Dorsolateral prefrontal cortex (tissue), 120 donors: ENCODE measurements at regions of chr13 and their contacts with region 1.

Region 1: DNA sequence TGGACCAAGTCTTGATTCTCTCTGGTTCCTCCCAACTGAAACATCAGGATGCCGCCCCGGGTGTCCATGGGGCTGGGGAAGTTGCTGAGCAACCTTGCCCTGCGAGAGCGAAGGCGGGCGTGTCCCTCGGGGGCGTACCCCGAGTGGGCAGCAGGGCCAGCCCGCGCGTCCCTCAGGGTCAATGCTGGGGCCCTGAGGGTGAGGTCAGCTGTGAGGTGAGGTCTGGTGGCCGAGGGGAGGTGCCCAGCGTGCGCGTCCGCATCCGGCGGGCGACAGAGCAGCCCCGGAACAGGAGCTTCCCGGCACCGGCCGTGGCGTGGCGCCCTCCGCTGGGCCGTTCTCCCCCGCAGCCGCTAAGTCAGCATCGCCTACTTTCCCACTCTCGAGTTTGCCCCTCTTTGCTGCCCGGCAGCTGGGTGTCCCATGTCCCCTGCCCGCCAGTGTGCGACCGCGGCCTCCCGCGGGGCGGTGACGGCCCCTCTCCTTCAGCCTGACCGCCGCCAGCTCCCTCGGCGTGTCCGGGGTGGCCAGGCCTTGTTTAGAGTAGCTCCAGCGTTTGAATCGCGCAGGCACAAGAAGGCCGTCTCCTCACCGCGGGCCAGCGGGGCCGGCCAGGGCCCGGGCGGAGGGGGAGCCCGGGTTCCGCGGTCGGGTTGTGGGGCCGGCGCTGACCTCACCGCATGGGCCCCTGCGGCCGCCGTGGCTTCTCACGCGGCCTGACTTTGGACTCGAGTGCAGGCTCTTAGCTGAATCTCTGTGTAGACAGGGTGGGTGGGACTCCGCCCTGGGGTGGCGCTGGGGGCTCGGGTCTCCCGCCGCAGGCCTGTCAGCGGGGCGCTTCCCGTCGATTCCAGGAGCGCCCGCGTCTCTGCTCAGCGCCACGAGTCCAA is 33.0 kb downstream of the GJA3 start:
- DNase-seq: peak in 8 of 10 donors; percentile 31 to 80 (median 58)
- H3K4me3 ChIP-seq: peak overlapping the region; percentile 45 to 86 (median 67)
- H3K27ac ChIP-seq: peak overlapping the region in 51 of 59 donors; percentile 7 to 93 (median 74)
- H3K27me3 ChIP-seq: peaks cover 0 to 41% (median 15%) of the 10 kb centered on the region in 45 donors
- CTCF ChIP-seq: peak in 52 of 56 donors; percentile 22 to 76 (median 52)

Region 2: DNA sequence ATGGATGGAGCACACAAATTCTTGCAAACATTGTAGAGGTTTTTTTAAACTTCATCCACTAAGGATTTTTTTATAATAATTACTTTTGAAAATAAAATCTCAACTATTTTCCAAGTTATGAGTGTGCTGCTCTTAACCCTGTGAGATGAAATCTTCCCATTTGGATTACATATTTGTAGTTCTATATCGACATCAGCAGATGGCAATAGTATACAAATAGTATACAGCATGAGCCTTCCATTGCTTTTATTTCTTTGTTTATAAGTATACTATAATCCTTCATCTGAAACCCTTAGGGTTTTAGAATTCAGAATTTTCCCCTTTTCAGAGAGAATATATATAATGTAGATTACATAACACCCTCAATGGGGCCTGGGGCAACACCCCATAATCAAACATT is 37.5 kb before region 1 on chr13:
- intact Hi-C with region 1: loop called in 1 of 2 experiments (anchors 5 kb)
- DNase-seq: no peak
- H3K4me3 ChIP-seq: no peak overlapping the region
- H3K27ac ChIP-seq: peak overlapping the region in 1 of 59 donors; percentile 50
- H3K27me3 ChIP-seq: no peaks in the 10 kb centered on the region
- CTCF ChIP-seq: peak in 41 of 56 donors; percentile 5 to 66 (median 38)

Region 3: DNA sequence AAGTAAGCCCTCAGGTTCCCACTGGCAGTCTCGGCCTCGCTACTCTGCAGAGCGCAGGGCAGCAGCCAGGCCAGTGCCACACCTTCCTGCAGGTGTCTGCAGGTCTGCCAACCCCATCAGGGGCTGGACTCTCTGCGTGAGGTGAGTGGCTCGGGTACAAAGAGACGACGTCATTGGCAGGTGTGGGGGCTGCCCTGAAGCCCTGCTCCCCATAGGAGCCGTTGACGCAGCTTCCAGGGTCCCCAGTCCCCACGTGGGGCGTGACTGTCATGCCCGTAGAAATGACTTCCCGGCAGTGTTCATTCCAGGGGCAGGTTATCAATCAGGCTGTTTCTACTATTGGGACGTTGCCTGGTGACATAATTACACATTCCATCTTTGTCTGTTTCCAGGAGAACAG is 119.6 kb after region 1 on chr13:
- intact Hi-C with region 1: no loop called
- DNase-seq: no peak
- H3K4me3 ChIP-seq: no peak overlapping the region
- H3K27ac ChIP-seq: no peak overlapping the region
- H3K27me3 ChIP-seq: no peaks in the 10 kb centered on the region
- CTCF ChIP-seq: no peak